Heart left ventricle (tissue), 16 donors: ENCODE measurements at regions of chr9 and their contacts with region 1.

Region 1: DNA sequence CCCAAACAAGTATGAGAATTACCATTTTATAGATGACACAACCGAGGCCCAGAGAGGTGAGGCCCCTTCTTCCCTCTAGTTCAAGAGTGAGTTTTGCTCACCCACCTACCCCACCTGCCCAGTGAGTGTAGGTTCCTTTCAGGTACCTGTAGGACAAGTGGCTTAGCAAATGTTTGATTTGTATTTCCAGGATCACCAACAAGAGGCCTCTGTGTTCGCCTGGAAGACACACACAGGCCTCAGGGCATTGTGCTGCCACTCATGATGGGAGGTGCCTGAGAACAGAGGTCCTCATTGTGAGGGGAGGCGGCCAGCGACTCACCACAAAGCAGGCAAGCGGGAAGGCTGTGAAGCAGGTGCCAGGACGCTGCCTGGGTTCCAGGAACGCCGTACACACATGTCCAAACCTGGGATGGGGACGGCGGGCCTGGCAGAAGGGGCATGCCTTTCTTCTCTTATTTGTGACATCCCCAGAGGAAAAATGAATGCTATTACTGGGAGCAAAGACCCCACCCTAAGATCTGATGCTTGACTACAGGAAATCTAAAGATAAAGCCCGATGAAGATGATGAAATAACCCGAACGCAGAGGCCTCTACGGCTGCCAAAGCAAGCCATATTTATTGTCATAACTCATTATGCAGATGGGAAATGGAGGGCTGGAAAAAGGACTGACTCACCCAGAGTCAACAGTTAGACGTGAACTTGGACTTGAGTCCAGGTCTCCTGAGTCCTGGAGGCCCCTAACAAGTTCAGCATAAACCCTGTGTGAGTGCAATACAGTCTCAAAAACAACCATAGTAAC is 60.2 kb upstream of the SLC25A51 start:
- DNase-seq: peak in 1 of 5 donors; percentile 55
- ATAC-seq: peak in 3 of 4 donors; percentile 40 to 69 (median 54)
- H3K4me3 ChIP-seq: no peak overlapping the region
- H3K27ac ChIP-seq: peak overlapping the region in 2 of 12 donors; percentile 41 to 46
- H3K4me1 ChIP-seq: peaks cover 0 to 41% (median 20%) of the 10 kb centered on the region in 12 donors
- H3K27me3 ChIP-seq: no peaks in the 10 kb centered on the region
- CTCF ChIP-seq: no peak
- POLR2A ChIP-seq: no peak

Region 2: DNA sequence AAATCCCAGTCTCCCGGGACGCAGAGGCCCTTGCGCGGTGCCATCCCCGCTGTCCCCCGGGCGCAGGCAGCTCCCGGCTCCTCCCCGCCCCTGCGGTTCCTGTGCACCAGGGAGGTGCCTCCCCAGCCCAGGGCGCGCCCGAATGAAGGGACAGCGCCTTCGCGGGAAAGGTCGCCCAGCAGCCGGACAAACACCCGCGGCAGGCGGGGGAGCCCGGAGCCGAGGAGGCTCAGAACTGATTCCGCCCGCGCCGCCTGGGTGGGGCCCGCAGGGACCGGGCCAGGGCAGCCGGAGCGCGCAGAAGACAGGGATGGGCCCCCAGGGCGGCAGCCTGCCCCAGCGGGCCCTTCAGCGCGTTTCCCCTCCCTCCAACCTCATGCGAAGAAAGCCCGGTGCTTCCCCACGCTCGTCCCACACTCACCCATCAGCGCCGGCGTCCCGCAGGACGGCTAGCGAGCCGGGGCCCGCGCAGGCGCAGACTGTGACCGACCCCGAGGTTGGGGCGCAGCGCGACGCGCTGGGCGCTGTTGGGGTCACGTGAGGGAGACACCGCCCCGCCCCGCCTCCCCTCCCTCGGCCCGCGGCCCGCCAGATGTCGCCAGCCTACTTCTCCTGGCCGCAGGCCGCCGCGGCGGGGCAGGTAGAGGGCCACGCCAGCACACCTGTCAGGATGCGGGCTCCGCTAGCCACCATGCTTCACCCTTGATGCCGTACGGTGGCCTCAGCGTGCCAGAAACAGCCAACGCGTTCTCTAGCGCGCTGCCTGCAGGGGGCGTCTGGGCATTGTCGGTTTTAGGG is 60.3 kb before region 1 on chr9 and contains the start of gene SLC25A51:
- intact Hi-C with region 1: no loop called
- DNase-seq: peak; percentile 93 to 97 (median 95)
- ATAC-seq: peak; percentile 83 to 94 (median 94)
- H3K4me3 ChIP-seq: peak within 1 kb of the TSS; percentile 71 to 99 (median 93)
- H3K27ac ChIP-seq: peak within 1 kb of the TSS; percentile 43 to 96 (median 88)
- H3K4me1 ChIP-seq: peaks cover 0 to 29% (median 21%) of the 10 kb centered on the region in 12 donors
- H3K27me3 ChIP-seq: no peaks in the 10 kb centered on the region
- CTCF ChIP-seq: peak; percentile 83 to 97 (median 92)
- POLR2A ChIP-seq: peak in 1 of 2 donors; percentile 71
- total RNA-seq, gene SLC25A51: 18.9 to 27.6 (median 22.9) TPM

Region 3: DNA sequence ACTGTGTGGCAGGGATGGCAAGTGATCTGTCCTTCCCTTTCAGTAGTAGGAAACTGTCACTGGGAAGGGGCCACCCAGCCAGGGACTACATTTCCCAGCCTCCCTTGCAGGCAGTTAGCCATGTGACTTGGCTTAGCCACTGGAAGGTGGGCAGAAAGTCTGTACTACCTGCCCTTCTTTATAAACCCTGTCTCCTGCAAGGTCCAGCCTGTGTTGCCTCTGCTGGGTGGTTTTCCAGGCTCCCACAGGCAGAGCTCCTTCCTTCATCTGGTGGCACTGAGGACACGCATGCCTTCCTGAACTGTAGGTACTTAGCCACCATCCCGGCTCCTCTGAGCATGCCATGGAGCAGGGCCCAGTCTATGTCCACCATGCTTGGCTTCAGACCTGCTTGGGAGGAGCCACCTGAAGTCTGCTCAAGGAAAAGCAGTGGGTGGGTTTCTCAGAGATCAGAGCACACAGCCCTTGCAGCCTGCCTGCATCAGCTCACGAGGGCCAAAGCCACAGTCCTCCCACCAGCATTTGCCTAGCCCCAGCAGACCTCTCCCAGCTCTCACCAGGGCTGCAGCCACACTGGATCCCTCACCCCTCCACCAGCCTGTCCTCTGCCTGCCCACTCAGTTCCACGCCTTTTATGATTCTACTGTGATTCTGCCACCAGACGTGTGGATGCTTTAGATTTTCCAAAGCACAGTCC is 43.5 kb before region 1 on chr9:
- intact Hi-C with region 1: loop called in 2 of 10 experiments (anchors 5 kb)
- DNase-seq: no peak
- ATAC-seq: no peak
- H3K4me3 ChIP-seq: no peak overlapping the region
- H3K27ac ChIP-seq: no peak overlapping the region
- H3K4me1 ChIP-seq: peaks cover 0 to 52% (median 26%) of the 10 kb centered on the region in 12 donors
- H3K27me3 ChIP-seq: no peaks in the 10 kb centered on the region
- CTCF ChIP-seq: no peak
- POLR2A ChIP-seq: no peak

Region 4: DNA sequence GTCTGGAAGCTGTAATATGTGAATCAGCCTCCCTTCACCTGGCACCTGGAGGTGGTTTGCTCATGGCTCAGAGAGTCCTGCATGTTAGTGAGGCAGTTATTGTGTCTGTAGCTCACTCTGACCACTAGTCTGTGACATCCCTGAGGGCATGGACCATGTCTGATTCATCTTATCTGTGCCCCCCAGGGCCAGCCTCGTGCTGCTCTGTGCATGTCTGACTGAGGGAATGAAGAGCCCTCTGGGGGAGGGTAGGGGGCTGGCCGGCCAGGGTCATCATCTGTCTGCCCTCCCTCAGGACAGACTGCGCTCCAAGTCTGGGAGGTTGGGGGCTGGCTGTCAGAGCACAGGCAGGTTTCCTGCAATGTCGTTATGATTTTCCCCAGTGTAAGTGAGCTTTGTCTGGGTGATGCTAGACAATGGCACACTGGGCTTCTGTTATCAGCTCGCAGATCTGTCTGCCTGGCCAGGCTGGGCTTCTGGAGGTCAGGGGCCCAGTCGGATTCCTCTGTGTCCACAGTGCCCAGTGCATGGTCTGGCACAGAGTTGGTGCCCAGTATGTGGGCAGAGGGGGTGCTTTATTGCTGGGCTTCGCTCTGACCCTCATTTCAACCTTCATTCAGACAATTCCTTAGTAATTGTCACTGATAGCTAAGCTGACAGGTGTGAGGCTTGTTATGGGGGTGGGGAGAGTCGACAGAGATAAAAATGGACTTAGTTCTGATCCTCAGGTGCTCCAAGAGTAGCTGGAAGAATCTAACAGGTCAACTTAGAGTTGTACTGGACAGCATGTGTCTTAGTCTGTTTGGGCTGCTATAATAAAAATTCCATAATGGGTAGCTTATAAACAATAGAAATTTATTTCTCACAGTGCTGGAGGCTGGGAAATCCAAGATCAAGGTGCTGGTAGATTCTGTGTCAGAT is 190.6 kb after region 1 on chr9:
- intact Hi-C with region 1: loop called in 2 of 10 experiments (anchors 5 to 10 kb)
- DNase-seq: no peak
- ATAC-seq: peak in 2 of 4 donors; percentile 13 to 33
- H3K4me3 ChIP-seq: no peak overlapping the region
- H3K27ac ChIP-seq: no peak overlapping the region
- H3K4me1 ChIP-seq: no peaks in the 10 kb centered on the region
- H3K27me3 ChIP-seq: no peaks in the 10 kb centered on the region
- CTCF ChIP-seq: no peak
- POLR2A ChIP-seq: no peak